Activated B cell treated with CpG ODN at 0.5 μM for 24 hours (primary cell): ENCODE measurements at regions of chr1 and their contacts with region 1.

Region 1: GRCh38 chr1:206952171-206952570 is 5.9 kb upstream of the PIGR start:
- DNase-seq: no peak
- ATAC-seq: no peak
- H3K4me3 Mint-ChIP-seq: no peak overlapping the region
- H3K27ac Mint-ChIP-seq: no peak overlapping the region
- H3K4me1 Mint-ChIP-seq: peaks cover 42% of the 10 kb centered on the region
- H3K27me3 Mint-ChIP-seq: no peaks in the 10 kb centered on the region
- CTCF ChIP-seq: no peak

Region 2: GRCh38 chr1:206865013-206865671 is 87.0 kb before region 1 on chr1 and contains the start of gene IL20:
- CTCF ChIA-PET with region 1: no interaction called
- POLR2A ChIA-PET with region 1: no interaction called
- intact Hi-C with region 1: no loop called
- DNase-seq: peak; percentile 72
- ATAC-seq: peak; percentile 90
- H3K4me3 Mint-ChIP-seq: no peak within 1 kb of the TSS
- H3K27ac Mint-ChIP-seq: no peak within 1 kb of the TSS
- H3K4me1 Mint-ChIP-seq: peaks cover 6% of the 10 kb centered on the region
- H3K27me3 Mint-ChIP-seq: peaks cover 26% of the 10 kb centered on the region
- CTCF ChIP-seq: peak; percentile 43
- total RNA-seq, gene IL20: not detected in 2 replicates

Region 3: DNA sequence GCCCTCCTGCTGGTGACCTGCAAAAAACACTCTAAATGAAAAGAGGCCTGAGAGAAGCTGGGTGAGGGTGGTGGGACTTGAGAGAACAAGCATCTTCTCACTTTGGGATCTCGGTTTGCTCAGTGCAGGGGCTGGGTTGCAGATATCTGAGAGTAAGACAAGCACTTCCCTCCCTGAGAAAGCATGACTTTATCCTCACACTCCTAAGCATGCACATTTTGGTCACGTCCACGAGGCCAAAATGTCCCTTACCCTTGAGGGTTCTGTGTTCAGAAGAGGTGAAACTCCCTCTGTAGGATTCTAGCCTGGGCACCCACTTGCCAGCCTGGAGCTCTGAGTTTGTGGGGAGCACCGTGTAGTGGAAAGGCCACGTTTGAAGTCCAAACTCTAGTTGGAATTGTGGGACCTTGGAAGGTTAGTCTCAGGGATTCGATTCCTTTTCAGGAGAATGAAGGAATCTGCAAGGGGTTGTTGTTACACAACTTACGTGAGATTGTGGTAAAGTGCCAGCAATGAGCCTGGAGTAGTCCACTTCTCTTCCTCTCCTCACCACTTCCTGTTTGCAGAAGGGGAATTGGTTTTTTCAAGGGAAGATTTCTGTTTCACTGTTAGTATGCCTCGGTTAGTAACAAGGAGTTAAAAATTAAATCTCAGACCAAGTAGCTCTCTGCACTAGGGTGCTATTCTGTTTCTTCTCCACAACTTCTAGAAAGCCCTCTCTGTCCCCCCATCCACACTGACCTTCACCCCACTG is 15.1 kb after region 1 on chr1:
- CTCF ChIA-PET with region 1: interaction called, 3 read pairs
- POLR2A ChIA-PET with region 1: no interaction called
- intact Hi-C with region 1: loop called (anchors 2 kb)
- DNase-seq: no peak
- ATAC-seq: peak; percentile 25
- H3K4me3 Mint-ChIP-seq: no peak overlapping the region
- H3K27ac Mint-ChIP-seq: no peak overlapping the region
- H3K4me1 Mint-ChIP-seq: peaks cover 27% of the 10 kb centered on the region
- H3K27me3 Mint-ChIP-seq: peaks cover under 1% of the 10 kb centered on the region
- CTCF ChIP-seq: no peak